ENCODE measurements at regions of chr15 and their contacts with region 1.

Region 1: GRCh38 chr15:65832549-65833364 is 36.5 kb upstream of the RAB11A start:
- DNase-seq: peak; percentile 65 to 73 (median 69)
- H3K4me3 ChIP-seq: peak overlapping the region in 1 of 2 donors; percentile 7
- H3K4me3 Mint-ChIP-seq: peak overlapping the region; percentile 77 to 91 (median 81)
- H3K27ac ChIP-seq: peak overlapping the region; percentile 71
- H3K27ac Mint-ChIP-seq: peak overlapping the region; percentile 93 to 97 (median 96)
- H3K4me1 ChIP-seq: peaks cover 68% of the 10 kb centered on the region
- H3K4me1 Mint-ChIP-seq: peaks cover 47 to 72% (median 59%) of the 10 kb centered on the region in 4 donors
- H3K27me3 ChIP-seq: no peaks in the 10 kb centered on the region
- H3K27me3 Mint-ChIP-seq: no peaks in the 10 kb centered on the region

Region 2: GRCh38 chr15:65730549-65731172 is 102.1 kb before region 1 on chr15:
- CTCF ChIA-PET with region 1: interaction called, 7 read pairs
- POLR2A ChIA-PET with region 1: interaction called, 4 read pairs
- intact Hi-C with region 1: loop called (anchors 5 kb)
- DNase-seq: no peak
- H3K4me3 ChIP-seq: no peak overlapping the region
- H3K4me3 Mint-ChIP-seq: no peak overlapping the region
- H3K27ac ChIP-seq: no peak overlapping the region
- H3K27ac Mint-ChIP-seq: peak overlapping the region in 5 of 7 donors; percentile 2 to 18 (median 8)
- H3K4me1 ChIP-seq: no peaks in the 10 kb centered on the region
- H3K4me1 Mint-ChIP-seq: peaks cover 0 to 5% (median 2%) of the 10 kb centered on the region in 4 donors
- H3K27me3 ChIP-seq: no peaks in the 10 kb centered on the region
- H3K27me3 Mint-ChIP-seq: no peaks in the 10 kb centered on the region

Region 3: GRCh38 chr15:65777053-65777452 is 55.7 kb before region 1 on chr15:
- CTCF ChIA-PET with region 1: interaction called, 14 read pairs
- POLR2A ChIA-PET with region 1: interaction called, 5 read pairs
- intact Hi-C with region 1: no loop called
- DNase-seq: no peak
- H3K4me3 ChIP-seq: no peak overlapping the region
- H3K4me3 Mint-ChIP-seq: no peak overlapping the region
- H3K27ac ChIP-seq: no peak overlapping the region
- H3K27ac Mint-ChIP-seq: peak overlapping the region in 1 of 7 donors; percentile 66
- H3K4me1 ChIP-seq: peaks cover 41% of the 10 kb centered on the region
- H3K4me1 Mint-ChIP-seq: peaks cover 26 to 47% (median 39%) of the 10 kb centered on the region in 4 donors
- H3K27me3 ChIP-seq: no peaks in the 10 kb centered on the region
- H3K27me3 Mint-ChIP-seq: no peaks in the 10 kb centered on the region

Region 4: GRCh38 chr15:65804252-65804931 is 28.4 kb before region 1 on chr15:
- CTCF ChIA-PET with region 1: interaction called, 5 read pairs
- POLR2A ChIA-PET with region 1: interaction called, 12 read pairs
- intact Hi-C with region 1: loop called (anchors 2 kb)
- DNase-seq: no peak
- H3K4me3 ChIP-seq: no peak overlapping the region
- H3K4me3 Mint-ChIP-seq: no peak overlapping the region
- H3K27ac ChIP-seq: no peak overlapping the region
- H3K27ac Mint-ChIP-seq: peak overlapping the region in 6 of 7 donors; percentile 48 to 91 (median 68)
- H3K4me1 ChIP-seq: peaks cover 41% of the 10 kb centered on the region
- H3K4me1 Mint-ChIP-seq: peaks cover 14 to 31% (median 26%) of the 10 kb centered on the region in 4 donors
- H3K27me3 ChIP-seq: no peaks in the 10 kb centered on the region
- H3K27me3 Mint-ChIP-seq: no peaks in the 10 kb centered on the region

Region 5: GRCh38 chr15:65818927-65819562 is 13.7 kb before region 1 on chr15:
- CTCF ChIA-PET with region 1: interaction called, 8 read pairs
- POLR2A ChIA-PET with region 1: interaction called, 47 read pairs
- intact Hi-C with region 1: loop called (anchors 1 kb)
- DNase-seq: peak; percentile 69 to 93 (median 89)
- H3K4me3 ChIP-seq: peak overlapping the region in 1 of 2 donors; percentile 17
- H3K4me3 Mint-ChIP-seq: peak overlapping the region; percentile 32 to 77 (median 74)
- H3K27ac ChIP-seq: peak overlapping the region; percentile 85
- H3K27ac Mint-ChIP-seq: peak overlapping the region; percentile 90 to 99 (median 96)
- H3K4me1 ChIP-seq: peaks cover 62% of the 10 kb centered on the region
- H3K4me1 Mint-ChIP-seq: peaks cover 35 to 63% (median 50%) of the 10 kb centered on the region in 4 donors
- H3K27me3 ChIP-seq: no peaks in the 10 kb centered on the region
- H3K27me3 Mint-ChIP-seq: no peaks in the 10 kb centered on the region

Region 6: GRCh38 chr15:65856821-65857455 is 24.2 kb after region 1 on chr15:
- CTCF ChIA-PET with region 1: interaction called, 35 read pairs
- POLR2A ChIA-PET with region 1: interaction called, 3 read pairs
- intact Hi-C with region 1: no loop called
- DNase-seq: peak; percentile 76 to 84 (median 77)
- H3K4me3 ChIP-seq: no peak overlapping the region
- H3K4me3 Mint-ChIP-seq: peak overlapping the region in 1 of 8 donors; percentile 32
- H3K27ac ChIP-seq: no peak overlapping the region
- H3K27ac Mint-ChIP-seq: peak overlapping the region in 4 of 7 donors; percentile 10 to 88 (median 49)
- H3K4me1 ChIP-seq: no peaks in the 10 kb centered on the region
- H3K4me1 Mint-ChIP-seq: peaks cover 9 to 13% (median 10%) of the 10 kb centered on the region in 4 donors
- H3K27me3 ChIP-seq: no peaks in the 10 kb centered on the region
- H3K27me3 Mint-ChIP-seq: no peaks in the 10 kb centered on the region

Region 7: DNA sequence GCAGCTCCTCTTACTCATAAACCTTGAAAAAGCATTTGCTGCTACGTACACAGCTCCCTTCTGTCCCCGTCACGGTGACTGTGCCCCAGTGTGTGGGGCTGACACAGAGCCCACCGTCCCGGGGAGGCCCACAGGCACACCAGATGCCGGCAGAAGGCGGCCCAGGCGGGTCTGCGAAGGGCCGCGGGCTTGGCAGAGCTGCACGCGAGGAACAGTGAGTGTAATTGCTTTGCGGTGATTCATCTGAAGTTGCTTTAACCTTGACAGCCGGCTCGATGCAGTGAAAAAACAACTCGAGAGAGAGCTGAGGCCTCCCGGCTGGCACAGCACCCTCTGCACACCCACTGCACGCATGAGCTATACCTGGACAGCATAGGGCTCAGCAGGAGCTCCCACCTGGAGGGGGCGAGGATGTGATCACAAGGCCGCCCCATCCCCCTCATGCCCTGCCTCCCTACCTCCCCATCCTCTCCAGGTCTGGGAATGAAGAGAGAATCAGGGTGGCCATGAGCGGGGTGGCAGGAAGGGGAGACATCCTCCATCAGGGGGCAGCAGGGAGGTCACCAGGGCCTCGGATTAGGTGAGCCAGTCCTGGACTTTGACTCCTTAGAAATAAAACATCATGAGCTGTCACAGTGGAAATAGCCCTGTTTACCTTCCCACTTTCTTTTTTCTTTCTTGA is 248.1 kb after region 1 on chr15:
- CTCF ChIA-PET with region 1: no interaction called
- POLR2A ChIA-PET with region 1: no interaction called
- intact Hi-C with region 1: no loop called
- DNase-seq: no peak
- H3K4me3 ChIP-seq: no peak overlapping the region
- H3K4me3 Mint-ChIP-seq: no peak overlapping the region
- H3K27ac ChIP-seq: no peak overlapping the region
- H3K27ac Mint-ChIP-seq: no peak overlapping the region
- H3K4me1 ChIP-seq: no peaks in the 10 kb centered on the region
- H3K4me1 Mint-ChIP-seq: no peaks in the 10 kb centered on the region
- H3K27me3 ChIP-seq: peaks cover 3% of the 10 kb centered on the region
- H3K27me3 Mint-ChIP-seq: peaks cover 18 to 19% of the 10 kb centered on the region in 2 donors

Region 8: GRCh38 chr15:66233487-66234415 is 401.0 kb after region 1 on chr15:
- CTCF ChIA-PET with region 1: no interaction called
- POLR2A ChIA-PET with region 1: no interaction called
- intact Hi-C with region 1: no loop called
- DNase-seq: no peak
- H3K4me3 ChIP-seq: no peak overlapping the region
- H3K4me3 Mint-ChIP-seq: no peak overlapping the region
- H3K27ac ChIP-seq: no peak overlapping the region
- H3K27ac Mint-ChIP-seq: no peak overlapping the region
- H3K4me1 ChIP-seq: no peaks in the 10 kb centered on the region
- H3K4me1 Mint-ChIP-seq: no peaks in the 10 kb centered on the region
- H3K27me3 ChIP-seq: no peaks in the 10 kb centered on the region
- H3K27me3 Mint-ChIP-seq: peaks cover 10 to 22% of the 10 kb centered on the region in 2 donors